CD8-positive, alpha-beta memory T cell (primary cell): ENCODE measurements at regions of chr14 and their contacts with region 1.

Region 1: GRCh38 chr14:23631702-23632460 is 4.3 kb upstream of the DHRS2 start:
- DNase-seq: peak; percentile 54 to 70 (median 65)
- H3K4me3 ChIP-seq: peak overlapping the region; percentile 53
- H3K4me3 Mint-ChIP-seq: peak overlapping the region; percentile 4 to 70 (median 54)
- H3K27ac ChIP-seq: no peak overlapping the region
- H3K27ac Mint-ChIP-seq: peak overlapping the region in 2 of 8 donors; percentile 16 to 29
- H3K4me1 ChIP-seq: peaks cover 8% of the 10 kb centered on the region
- H3K4me1 Mint-ChIP-seq: peaks cover 9 to 13% (median 9%) of the 10 kb centered on the region in 3 donors
- H3K27me3 ChIP-seq: no peaks in the 10 kb centered on the region
- H3K27me3 Mint-ChIP-seq: peaks cover 2 to 7% of the 10 kb centered on the region in 2 donors

Region 2: DNA sequence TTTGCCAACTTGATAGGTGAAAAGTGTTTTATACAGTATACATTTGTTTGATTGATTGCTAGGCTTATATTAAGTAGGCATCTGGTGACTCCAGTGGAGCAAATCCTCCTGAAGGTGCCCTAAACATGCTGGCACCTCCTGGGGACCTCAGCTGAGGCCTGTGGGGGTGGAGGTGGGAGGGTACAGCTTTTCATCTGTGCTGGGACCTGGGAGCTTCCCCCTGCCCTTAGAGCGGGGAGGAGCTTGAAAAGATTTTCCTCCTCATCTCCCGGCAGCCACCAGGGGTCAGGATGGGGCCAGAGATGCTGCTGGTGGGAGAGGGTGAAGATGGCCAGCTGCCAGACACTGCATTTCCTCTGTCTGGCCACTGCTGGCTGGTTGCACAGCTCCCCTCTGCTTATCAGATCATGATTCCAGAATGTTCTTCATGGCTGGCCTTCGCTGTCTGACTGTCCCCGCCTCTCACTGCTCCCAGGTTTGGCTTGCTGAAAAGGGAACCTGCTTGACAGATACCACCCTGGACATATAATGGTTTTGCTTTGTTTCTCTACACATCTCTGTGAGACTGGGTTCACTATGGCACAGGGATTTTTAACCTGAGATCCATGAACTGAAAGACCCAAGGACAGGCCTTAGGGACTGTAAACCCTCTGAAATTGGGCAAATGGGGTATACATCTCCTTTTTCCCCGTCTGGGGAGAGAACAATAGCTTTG is 42.8 kb before region 1 on chr14:
- CTCF ChIA-PET with region 1: interaction called, 21 read pairs
- POLR2A ChIA-PET with region 1: no interaction called
- DNase-seq: peak; percentile 65 to 86 (median 76)
- H3K4me3 ChIP-seq: no peak overlapping the region
- H3K4me3 Mint-ChIP-seq: peak overlapping the region in 1 of 7 donors; percentile 20
- H3K27ac ChIP-seq: no peak overlapping the region
- H3K27ac Mint-ChIP-seq: peak overlapping the region in 2 of 8 donors; percentile 58 to 60
- H3K4me1 ChIP-seq: peaks cover 9% of the 10 kb centered on the region
- H3K4me1 Mint-ChIP-seq: peaks cover 3 to 8% (median 7%) of the 10 kb centered on the region in 3 donors
- H3K27me3 ChIP-seq: no peaks in the 10 kb centered on the region
- H3K27me3 Mint-ChIP-seq: peaks cover 13 to 22% of the 10 kb centered on the region in 2 donors

Region 3: DNA sequence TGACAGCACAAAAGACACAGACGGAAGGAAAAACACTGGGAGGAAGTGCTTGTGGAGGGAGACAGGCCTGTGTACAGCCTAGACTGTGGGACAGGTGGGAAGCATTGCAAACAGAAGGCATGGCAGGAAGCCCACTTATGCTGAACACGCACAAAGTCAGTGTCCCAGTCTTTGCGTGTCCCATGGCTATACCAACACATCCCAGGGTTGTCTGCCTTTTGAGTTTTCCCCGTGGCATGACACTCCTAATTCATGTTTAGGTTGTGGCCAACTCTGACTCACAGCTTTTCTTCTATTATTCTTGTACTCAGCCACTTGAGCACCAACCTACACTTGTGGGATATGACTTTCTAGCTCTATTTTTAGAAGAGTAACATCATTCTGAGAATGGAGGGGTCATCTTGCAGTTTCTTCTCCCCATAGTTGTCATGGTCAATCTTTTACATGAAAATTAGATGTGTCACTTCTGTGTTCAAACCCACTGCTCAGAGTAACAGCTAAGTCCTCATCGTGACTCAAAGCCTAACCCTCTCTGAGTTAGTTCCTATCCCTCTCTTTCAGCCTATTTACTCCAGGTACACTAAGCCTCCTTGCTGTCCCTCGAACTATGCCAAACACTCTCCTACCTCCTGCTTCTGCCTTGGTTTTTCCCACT is 25.8 kb before region 1 on chr14:
- CTCF ChIA-PET with region 1: interaction called, 51 read pairs
- POLR2A ChIA-PET with region 1: no interaction called
- DNase-seq: no peak
- H3K4me3 ChIP-seq: no peak overlapping the region
- H3K4me3 Mint-ChIP-seq: no peak overlapping the region
- H3K27ac ChIP-seq: no peak overlapping the region
- H3K27ac Mint-ChIP-seq: peak overlapping the region in 2 of 8 donors; percentile 17 to 49
- H3K4me1 ChIP-seq: peaks cover 23% of the 10 kb centered on the region
- H3K4me1 Mint-ChIP-seq: peaks cover 21 to 25% (median 24%) of the 10 kb centered on the region in 3 donors
- H3K27me3 ChIP-seq: no peaks in the 10 kb centered on the region
- H3K27me3 Mint-ChIP-seq: peaks cover 5% of the 10 kb centered on the region in 2 donors

Region 4: GRCh38 chr14:23621204-23621931 is 10.5 kb before region 1 on chr14:
- CTCF ChIA-PET with region 1: interaction called, 16 read pairs
- POLR2A ChIA-PET with region 1: no interaction called
- DNase-seq: no peak
- H3K4me3 ChIP-seq: no peak overlapping the region
- H3K4me3 Mint-ChIP-seq: no peak overlapping the region
- H3K27ac ChIP-seq: no peak overlapping the region
- H3K27ac Mint-ChIP-seq: no peak overlapping the region
- H3K4me1 ChIP-seq: no peaks in the 10 kb centered on the region
- H3K4me1 Mint-ChIP-seq: no peaks in the 10 kb centered on the region
- H3K27me3 ChIP-seq: peaks cover 4% of the 10 kb centered on the region
- H3K27me3 Mint-ChIP-seq: peaks cover 8 to 54% of the 10 kb centered on the region in 2 donors

Region 5: DNA sequence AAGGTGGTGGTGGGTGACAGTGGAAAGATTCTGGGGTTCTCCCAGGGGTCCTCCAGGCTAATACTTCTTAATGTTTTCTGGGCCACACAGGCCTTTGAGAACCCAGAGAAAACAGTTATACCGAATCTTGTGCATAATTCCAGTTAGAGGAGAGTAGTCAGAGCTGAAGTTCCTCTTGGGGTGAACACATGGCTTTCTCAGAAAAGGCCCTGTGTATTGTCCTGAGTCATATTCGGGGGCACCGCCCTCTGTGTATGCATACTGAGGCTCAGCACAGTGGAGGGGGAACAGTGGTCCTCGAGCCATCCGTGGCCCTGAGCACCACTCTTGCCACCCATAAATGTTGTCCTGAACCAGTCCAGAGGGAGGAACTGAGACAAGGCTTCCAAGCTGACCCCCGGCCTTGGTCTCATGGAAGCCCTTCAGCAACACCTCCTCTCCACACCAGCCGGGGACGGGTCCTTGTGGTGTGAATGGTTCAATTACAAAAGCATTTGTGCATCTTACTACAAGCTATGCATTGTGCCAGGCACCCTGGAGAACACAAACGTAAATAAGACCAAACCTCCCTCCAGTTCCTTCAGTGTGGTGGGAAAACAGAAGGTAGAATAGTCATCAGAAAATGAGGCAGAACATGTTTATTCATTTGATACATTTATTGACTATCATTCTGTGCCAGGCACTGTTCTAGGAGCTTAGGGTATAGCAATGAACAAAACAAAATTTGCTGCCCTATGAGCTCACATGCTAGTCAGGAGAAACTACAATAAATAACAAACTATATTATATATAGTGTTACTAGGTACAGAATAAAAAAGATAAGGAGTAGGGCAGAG is 14.1 kb after region 1 on chr14:
- CTCF ChIA-PET with region 1: interaction called, 28 read pairs
- POLR2A ChIA-PET with region 1: no interaction called
- DNase-seq: no peak
- H3K4me3 ChIP-seq: no peak overlapping the region
- H3K4me3 Mint-ChIP-seq: no peak overlapping the region
- H3K27ac ChIP-seq: no peak overlapping the region
- H3K27ac Mint-ChIP-seq: no peak overlapping the region
- H3K4me1 ChIP-seq: no peaks in the 10 kb centered on the region
- H3K4me1 Mint-ChIP-seq: no peaks in the 10 kb centered on the region
- H3K27me3 ChIP-seq: no peaks in the 10 kb centered on the region
- H3K27me3 Mint-ChIP-seq: peaks cover 2 to 17% of the 10 kb centered on the region in 2 donors

Region 6: GRCh38 chr14:23751616-23752015 is 119.7 kb after region 1 on chr14:
- CTCF ChIA-PET with region 1: no interaction called
- POLR2A ChIA-PET with region 1: no interaction called
- DNase-seq: no peak
- H3K4me3 ChIP-seq: no peak overlapping the region
- H3K4me3 Mint-ChIP-seq: no peak overlapping the region
- H3K27ac ChIP-seq: no peak overlapping the region
- H3K27ac Mint-ChIP-seq: no peak overlapping the region
- H3K4me1 ChIP-seq: no peaks in the 10 kb centered on the region
- H3K4me1 Mint-ChIP-seq: no peaks in the 10 kb centered on the region
- H3K27me3 ChIP-seq: no peaks in the 10 kb centered on the region
- H3K27me3 Mint-ChIP-seq: peaks cover 10 to 42% of the 10 kb centered on the region in 2 donors

Region 7: GRCh38 chr14:23929822-23930294 is 298.0 kb after region 1 on chr14:
- CTCF ChIA-PET with region 1: interaction called, 11 read pairs
- POLR2A ChIA-PET with region 1: no interaction called
- DNase-seq: peak; percentile 59 to 85 (median 71)
- H3K4me3 ChIP-seq: no peak overlapping the region
- H3K4me3 Mint-ChIP-seq: no peak overlapping the region
- H3K27ac ChIP-seq: no peak overlapping the region
- H3K27ac Mint-ChIP-seq: no peak overlapping the region
- H3K4me1 ChIP-seq: no peaks in the 10 kb centered on the region
- H3K4me1 Mint-ChIP-seq: no peaks in the 10 kb centered on the region
- H3K27me3 ChIP-seq: no peaks in the 10 kb centered on the region
- H3K27me3 Mint-ChIP-seq: peaks cover 4 to 8% of the 10 kb centered on the region in 2 donors

Region 8: GRCh38 chr14:23953464-23954278 is 321.8 kb after region 1 on chr14 and contains the start of gene DHRS4:
- CTCF ChIA-PET with region 1: interaction called, 13 read pairs
- POLR2A ChIA-PET with region 1: no interaction called
- DNase-seq: peak; percentile 69 to 88 (median 75)
- H3K4me3 ChIP-seq: peak within 1 kb of the TSS; percentile 87
- H3K4me3 Mint-ChIP-seq: peak within 1 kb of the TSS; percentile 95 to 100 (median 96)
- H3K27ac ChIP-seq: peak within 1 kb of the TSS; percentile 71
- H3K27ac Mint-ChIP-seq: peak within 1 kb of the TSS; percentile 76 to 97 (median 94)
- H3K4me1 ChIP-seq: peaks cover 16% of the 10 kb centered on the region
- H3K4me1 Mint-ChIP-seq: peaks cover 15 to 35% (median 27%) of the 10 kb centered on the region in 3 donors
- H3K27me3 ChIP-seq: no peaks in the 10 kb centered on the region
- H3K27me3 Mint-ChIP-seq: no peaks in the 10 kb centered on the region
- total RNA-seq, gene DHRS4: 24.0 to 25.2 TPM